CD8-positive, alpha-beta T cell (primary cell): ENCODE measurements at regions of chr2 and their contacts with region 1.

Region 1: GRCh38 chr2:224357098-224357901 is 44.6 kb downstream of the FAM124B start:
- DNase-seq: peak in 8 of 9 experiments; percentile 16 to 73 (median 54)
- ATAC-seq: peak; percentile 57
- H3K4me3 ChIP-seq: no peak overlapping the region
- H3K4me3 Mint-ChIP-seq: no peak overlapping the region
- H3K27ac ChIP-seq: no peak overlapping the region
- H3K27ac Mint-ChIP-seq: no peak overlapping the region
- H3K4me1 ChIP-seq: no peaks in the 10 kb centered on the region
- H3K4me1 Mint-ChIP-seq: no peaks in the 10 kb centered on the region
- H3K27me3 ChIP-seq: no peaks in the 10 kb centered on the region
- H3K27me3 Mint-ChIP-seq: peaks cover 4% of the 10 kb centered on the region
- CTCF ChIP-seq: peak; percentile 88

Region 2: GRCh38 chr2:224369028-224369632 is 11.8 kb after region 1 on chr2:
- CTCF ChIA-PET with region 1: interaction called, 13 read pairs
- POLR2A ChIA-PET with region 1: no interaction called
- intact Hi-C with region 1: no loop called
- DNase-seq: peak in 3 of 9 experiments; percentile 10 to 54 (median 45)
- ATAC-seq: no peak
- H3K4me3 ChIP-seq: no peak overlapping the region
- H3K4me3 Mint-ChIP-seq: no peak overlapping the region
- H3K27ac ChIP-seq: no peak overlapping the region
- H3K27ac Mint-ChIP-seq: no peak overlapping the region
- H3K4me1 ChIP-seq: no peaks in the 10 kb centered on the region
- H3K4me1 Mint-ChIP-seq: no peaks in the 10 kb centered on the region
- H3K27me3 ChIP-seq: no peaks in the 10 kb centered on the region
- H3K27me3 Mint-ChIP-seq: peaks cover 2% of the 10 kb centered on the region
- CTCF ChIP-seq: peak; percentile 76

Region 3: DNA sequence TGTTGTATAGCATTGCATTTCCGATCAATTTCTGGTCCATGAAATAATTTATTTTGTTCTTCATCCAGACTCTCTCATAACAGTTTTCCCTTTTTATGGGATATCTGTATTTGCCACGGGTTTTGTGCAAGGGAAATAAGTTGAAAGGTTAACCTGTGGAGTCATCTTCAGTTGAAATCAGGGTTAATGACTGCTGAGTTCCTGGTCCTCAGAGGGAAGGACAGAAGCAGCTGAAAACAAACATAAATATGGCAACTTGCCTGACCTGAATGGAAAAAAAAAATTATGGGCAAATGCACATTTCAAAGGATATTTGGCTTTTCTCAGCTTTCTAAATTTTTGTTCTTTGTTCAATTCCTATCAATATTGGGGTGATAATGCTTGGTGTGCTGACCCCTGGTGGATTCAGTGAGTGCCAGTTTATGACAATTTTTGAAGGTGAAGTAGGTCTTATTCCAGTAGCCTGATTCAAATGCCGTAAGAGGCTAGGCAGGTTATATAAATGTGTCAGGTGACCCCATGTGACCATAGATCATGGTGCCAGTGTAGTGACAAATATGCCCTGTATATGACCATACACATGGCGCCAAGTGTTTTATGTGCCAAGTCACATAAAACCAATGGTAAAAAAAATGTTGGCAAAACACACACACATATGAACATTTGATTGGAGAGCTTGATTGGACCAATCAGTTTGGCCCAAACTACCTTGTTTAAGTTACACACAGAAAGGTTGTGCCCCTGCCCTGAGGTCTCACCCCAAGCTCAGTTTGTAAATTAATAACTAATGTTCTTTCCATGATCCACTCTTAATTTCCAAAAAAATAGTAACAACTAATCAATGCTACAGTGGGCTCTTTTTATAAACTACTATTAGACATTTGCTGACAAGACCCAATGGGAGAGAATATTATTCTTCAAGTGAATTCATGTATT is 92.2 kb after region 1 on chr2:
- CTCF ChIA-PET with region 1: no interaction called
- POLR2A ChIA-PET with region 1: no interaction called
- intact Hi-C with region 1: loop called in 1 of 2 experiments (anchors 5 kb)
- DNase-seq: peak in 2 of 9 experiments; percentile 15 to 30
- ATAC-seq: no peak
- H3K4me3 ChIP-seq: no peak overlapping the region
- H3K4me3 Mint-ChIP-seq: no peak overlapping the region
- H3K27ac ChIP-seq: no peak overlapping the region
- H3K27ac Mint-ChIP-seq: no peak overlapping the region
- H3K4me1 ChIP-seq: no peaks in the 10 kb centered on the region
- H3K4me1 Mint-ChIP-seq: no peaks in the 10 kb centered on the region
- H3K27me3 ChIP-seq: no peaks in the 10 kb centered on the region
- H3K27me3 Mint-ChIP-seq: peaks cover 6% of the 10 kb centered on the region
- CTCF ChIP-seq: peak; percentile 34

Region 4: GRCh38 chr2:224778474-224778877 is 421.2 kb after region 1 on chr2:
- CTCF ChIA-PET with region 1: interaction called, 4 read pairs
- POLR2A ChIA-PET with region 1: no interaction called
- intact Hi-C with region 1: loop called in 1 of 2 experiments (anchors 1 kb)
- DNase-seq: peak; percentile 29 to 70 (median 55)
- ATAC-seq: peak; percentile 63
- H3K4me3 ChIP-seq: no peak overlapping the region
- H3K4me3 Mint-ChIP-seq: no peak overlapping the region
- H3K27ac ChIP-seq: no peak overlapping the region
- H3K27ac Mint-ChIP-seq: no peak overlapping the region
- H3K4me1 ChIP-seq: no peaks in the 10 kb centered on the region
- H3K4me1 Mint-ChIP-seq: peaks cover 5% of the 10 kb centered on the region
- H3K27me3 ChIP-seq: no peaks in the 10 kb centered on the region
- H3K27me3 Mint-ChIP-seq: no peaks in the 10 kb centered on the region
- CTCF ChIP-seq: peak; percentile 89

Region 5: GRCh38 chr2:225122583-225123486 is 765.5 kb after region 1 on chr2:
- CTCF ChIA-PET with region 1: no interaction called
- POLR2A ChIA-PET with region 1: no interaction called
- intact Hi-C with region 1: loop called in 1 of 2 experiments (anchors 10 kb)
- DNase-seq: peak in 4 of 9 experiments; percentile 4 to 43 (median 28)
- ATAC-seq: no peak
- H3K4me3 ChIP-seq: no peak overlapping the region
- H3K4me3 Mint-ChIP-seq: no peak overlapping the region
- H3K27ac ChIP-seq: no peak overlapping the region
- H3K27ac Mint-ChIP-seq: no peak overlapping the region
- H3K4me1 ChIP-seq: peaks cover 3% of the 10 kb centered on the region
- H3K4me1 Mint-ChIP-seq: peaks cover 3% of the 10 kb centered on the region
- H3K27me3 ChIP-seq: no peaks in the 10 kb centered on the region
- H3K27me3 Mint-ChIP-seq: no peaks in the 10 kb centered on the region
- CTCF ChIP-seq: peak; percentile 61